B cell (primary cell): ENCODE measurements at regions of chr9 and their contacts with region 1.

Region 1: GRCh38 chr9:98056269-98057137 is at the start of gene NANS:
- DNase-seq: peak; percentile 92
- ATAC-seq: peak; percentile 97
- H3K4me3 ChIP-seq: peak within 1 kb of the TSS; percentile 76 to 85 (median 81)
- H3K4me3 Mint-ChIP-seq: peak within 1 kb of the TSS; percentile 99
- H3K27ac ChIP-seq: peak within 1 kb of the TSS; percentile 80 to 89
- H3K27ac Mint-ChIP-seq: peak within 1 kb of the TSS; percentile 95
- H3K4me1 ChIP-seq: peaks cover 8 to 18% of the 10 kb centered on the region in 2 donors
- H3K4me1 Mint-ChIP-seq: peaks cover 17% of the 10 kb centered on the region
- H3K27me3 ChIP-seq: no peaks in the 10 kb centered on the region
- H3K27me3 Mint-ChIP-seq: no peaks in the 10 kb centered on the region
- CTCF ChIP-seq: no peak
- total RNA-seq, gene NANS: 14.9 and 15.3 TPM in 2 replicates

Region 2: GRCh38 chr9:97632985-97633858 is 423.3 kb before region 1 on chr9 and contains the starts of genes NCBP1 and TSTD2:
- CTCF ChIA-PET with region 1: no interaction called
- POLR2A ChIA-PET with region 1: no interaction called
- intact Hi-C with region 1: loop called (anchors 5 kb)
- DNase-seq: peak; percentile 99
- ATAC-seq: peak; percentile 91
- H3K4me3 ChIP-seq: peak within 1 kb of the TSS; percentile 94 to 99 (median 95)
- H3K4me3 Mint-ChIP-seq: peak within 1 kb of the TSS; percentile 97
- H3K27ac ChIP-seq: peak within 1 kb of the TSS; percentile 92 to 93
- H3K27ac Mint-ChIP-seq: peak within 1 kb of the TSS; percentile 98
- H3K4me1 ChIP-seq: peaks cover 26 to 35% of the 10 kb centered on the region in 2 donors
- H3K4me1 Mint-ChIP-seq: peaks cover 58% of the 10 kb centered on the region
- H3K27me3 ChIP-seq: no peaks in the 10 kb centered on the region
- H3K27me3 Mint-ChIP-seq: no peaks in the 10 kb centered on the region
- CTCF ChIP-seq: no peak
- total RNA-seq, gene NCBP1: 38.0 and 40.7 TPM in 2 replicates
- total RNA-seq, gene TSTD2: 29.2 and 31.1 TPM in 2 replicates

Region 3: DNA sequence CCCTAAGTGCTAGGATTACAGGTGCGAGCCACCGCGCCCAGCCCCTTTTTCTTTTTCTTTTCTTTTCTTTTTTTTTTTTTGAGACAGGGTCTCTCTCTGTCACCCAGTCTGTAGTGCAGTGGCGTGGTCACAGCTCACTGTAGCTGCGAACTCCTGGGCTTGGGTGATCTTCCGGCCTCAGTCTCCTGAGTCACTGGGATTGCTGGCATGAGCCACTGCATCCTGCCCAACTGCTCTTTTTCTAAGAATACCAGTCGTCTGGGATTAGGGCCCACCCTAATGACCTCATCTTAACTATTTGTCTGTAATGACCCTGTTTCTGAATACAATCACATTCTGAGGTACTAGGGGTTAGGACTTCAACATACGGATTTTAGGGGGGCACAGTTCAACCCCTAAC is 34.1 kb before region 1 on chr9:
- CTCF ChIA-PET with region 1: no interaction called
- POLR2A ChIA-PET with region 1: no interaction called
- intact Hi-C with region 1: no loop called
- DNase-seq: no peak
- ATAC-seq: no peak
- H3K4me3 ChIP-seq: no peak overlapping the region
- H3K4me3 Mint-ChIP-seq: no peak overlapping the region
- H3K27ac ChIP-seq: no peak overlapping the region
- H3K27ac Mint-ChIP-seq: no peak overlapping the region
- H3K4me1 ChIP-seq: no peaks in the 10 kb centered on the region
- H3K4me1 Mint-ChIP-seq: no peaks in the 10 kb centered on the region
- H3K27me3 ChIP-seq: no peaks in the 10 kb centered on the region
- H3K27me3 Mint-ChIP-seq: no peaks in the 10 kb centered on the region
- CTCF ChIP-seq: no peak

Region 4: GRCh38 chr9:98034593-98035546 is 21.6 kb before region 1 on chr9:
- CTCF ChIA-PET with region 1: interaction called, 11 read pairs
- POLR2A ChIA-PET with region 1: no interaction called
- intact Hi-C with region 1: loop called (anchors 1 kb)
- DNase-seq: peak; percentile 91
- ATAC-seq: peak; percentile 87
- H3K4me3 ChIP-seq: peak overlapping the region in 1 of 5 experiments; percentile 38
- H3K4me3 Mint-ChIP-seq: peak overlapping the region; percentile 53
- H3K27ac ChIP-seq: peak overlapping the region; percentile 1 to 34
- H3K27ac Mint-ChIP-seq: peak overlapping the region; percentile 57
- H3K4me1 ChIP-seq: peaks cover 10 to 25% of the 10 kb centered on the region in 2 donors
- H3K4me1 Mint-ChIP-seq: peaks cover 37% of the 10 kb centered on the region
- H3K27me3 ChIP-seq: no peaks in the 10 kb centered on the region
- H3K27me3 Mint-ChIP-seq: no peaks in the 10 kb centered on the region
- CTCF ChIP-seq: peak; percentile 78

Region 5: DNA sequence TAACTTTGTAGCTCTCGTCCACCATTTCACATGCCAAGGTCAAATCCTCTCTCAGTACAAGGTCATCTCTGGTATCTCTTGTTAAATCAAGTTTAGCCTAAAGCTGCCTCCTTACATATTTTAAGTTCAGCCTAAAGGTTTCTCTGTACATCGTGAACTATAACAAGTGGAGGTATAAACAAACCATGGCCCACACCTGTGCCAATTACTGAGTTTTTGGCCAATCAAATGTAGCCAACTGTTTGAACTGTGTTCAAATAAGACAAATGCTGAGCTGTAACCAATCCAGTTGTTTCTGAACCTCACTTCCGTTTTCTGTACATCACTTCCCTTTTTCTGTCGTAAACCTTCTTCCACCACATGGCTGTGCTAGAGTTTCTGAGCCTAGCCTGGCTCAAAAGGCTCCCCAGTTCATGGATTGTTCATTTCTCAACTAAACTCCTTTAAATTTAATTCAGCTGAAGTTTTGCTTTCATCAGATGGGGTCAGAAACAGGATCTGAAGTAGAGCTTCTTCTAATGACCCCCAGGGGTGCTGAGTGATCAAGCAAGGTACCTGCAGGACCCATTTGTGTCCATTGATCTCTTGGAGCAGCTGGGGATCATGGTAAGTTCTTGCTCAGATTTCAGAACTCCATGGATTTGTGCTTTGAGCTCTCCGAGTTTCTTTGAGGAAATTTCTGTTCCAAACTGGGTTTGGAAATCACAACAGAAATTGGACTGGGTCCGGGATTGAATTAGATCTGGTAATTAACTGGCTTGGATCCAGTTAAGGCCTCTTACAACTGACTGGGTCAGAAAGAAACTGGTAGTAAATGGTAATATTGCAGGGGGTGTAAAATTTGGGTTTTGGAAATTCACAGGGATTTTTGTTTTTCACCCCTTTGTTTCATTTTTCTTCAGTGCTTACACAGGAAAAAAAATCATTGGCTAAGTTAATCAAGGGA is 11.0 kb before region 1 on chr9:
- CTCF ChIA-PET with region 1: interaction called, 8 read pairs
- POLR2A ChIA-PET with region 1: interaction called, 6 read pairs
- intact Hi-C with region 1: loop called (anchors 1 kb)
- DNase-seq: peak; percentile 83
- ATAC-seq: peak; percentile 77
- H3K4me3 ChIP-seq: peak overlapping the region; percentile 15 to 74 (median 48)
- H3K4me3 Mint-ChIP-seq: peak overlapping the region; percentile 63
- H3K27ac ChIP-seq: peak overlapping the region; percentile 56 to 80
- H3K27ac Mint-ChIP-seq: peak overlapping the region; percentile 84
- H3K4me1 ChIP-seq: peaks cover 33 to 35% of the 10 kb centered on the region in 2 donors
- H3K4me1 Mint-ChIP-seq: peaks cover 39% of the 10 kb centered on the region
- H3K27me3 ChIP-seq: no peaks in the 10 kb centered on the region
- H3K27me3 Mint-ChIP-seq: no peaks in the 10 kb centered on the region
- CTCF ChIP-seq: peak; percentile 13

Region 6: GRCh38 chr9:98101868-98102273 is 45.4 kb after region 1 on chr9:
- CTCF ChIA-PET with region 1: no interaction called
- POLR2A ChIA-PET with region 1: interaction called, 6 read pairs
- intact Hi-C with region 1: loop called (anchors 5 kb)
- DNase-seq: peak; percentile 91
- ATAC-seq: peak; percentile 98
- H3K4me3 ChIP-seq: peak overlapping the region in 1 of 5 experiments; percentile 38
- H3K4me3 Mint-ChIP-seq: peak overlapping the region; percentile 68
- H3K27ac ChIP-seq: peak overlapping the region; percentile 66 to 74
- H3K27ac Mint-ChIP-seq: peak overlapping the region; percentile 81
- H3K4me1 ChIP-seq: peaks cover 82 to 87% of the 10 kb centered on the region in 2 donors
- H3K4me1 Mint-ChIP-seq: peaks cover 77% of the 10 kb centered on the region
- H3K27me3 ChIP-seq: no peaks in the 10 kb centered on the region
- H3K27me3 Mint-ChIP-seq: no peaks in the 10 kb centered on the region
- CTCF ChIP-seq: no peak

Region 7: DNA sequence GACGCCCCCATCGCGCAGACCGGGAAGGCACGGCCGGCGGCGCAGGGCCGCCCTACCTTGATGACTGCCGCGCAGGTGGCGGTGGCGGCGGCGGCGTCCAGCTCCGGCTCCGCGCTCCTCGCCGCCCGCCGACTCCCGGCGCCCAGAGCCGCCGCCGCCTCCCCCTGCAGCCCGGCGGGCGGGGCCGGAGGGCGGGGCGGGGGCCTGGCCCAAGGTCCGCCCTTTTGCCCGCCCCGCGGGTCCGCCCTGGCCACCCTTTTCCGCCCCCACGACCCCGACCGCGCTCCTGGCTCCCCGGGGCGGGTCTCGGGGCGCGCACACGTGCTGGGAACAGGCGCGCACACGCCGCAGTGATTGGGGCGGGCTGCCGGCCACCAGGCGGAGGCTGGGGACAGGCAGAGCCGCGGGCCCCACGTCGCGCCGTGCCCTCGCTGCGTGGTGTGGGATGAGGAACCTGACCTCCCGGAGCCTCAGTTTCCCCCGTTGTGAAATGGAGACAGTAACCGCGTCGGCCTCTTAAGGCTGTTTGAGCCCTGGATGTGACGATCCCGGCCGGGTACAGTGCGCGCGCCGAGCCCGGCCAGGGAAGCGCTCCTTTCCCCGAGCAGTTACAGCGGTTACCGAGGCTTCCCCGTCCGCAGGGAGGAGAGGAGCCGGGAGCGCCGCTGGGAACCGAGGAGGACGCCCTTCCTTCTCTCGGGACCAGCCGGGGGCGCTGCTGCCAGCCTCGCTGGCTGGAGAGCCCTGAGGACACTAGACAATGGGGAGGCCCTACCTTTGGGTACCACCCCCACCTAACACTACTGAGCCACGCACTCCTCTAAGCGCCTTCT is 136.2 kb after region 1 on chr9 and contains the start of gene CORO2A:
- CTCF ChIA-PET with region 1: no interaction called
- POLR2A ChIA-PET with region 1: no interaction called
- intact Hi-C with region 1: no loop called
- DNase-seq: peak; percentile 73
- ATAC-seq: peak; percentile 91
- H3K4me3 ChIP-seq: peak within 1 kb of the TSS; percentile 34 to 77 (median 67)
- H3K4me3 Mint-ChIP-seq: peak within 1 kb of the TSS; percentile 91
- H3K27ac ChIP-seq: no peak within 1 kb of the TSS
- H3K27ac Mint-ChIP-seq: peak within 1 kb of the TSS; percentile 71
- H3K4me1 ChIP-seq: peaks cover 8 to 18% of the 10 kb centered on the region in 2 donors
- H3K4me1 Mint-ChIP-seq: peaks cover 10% of the 10 kb centered on the region
- H3K27me3 ChIP-seq: peaks cover 0 to 12% (median 2%) of the 10 kb centered on the region in 4 experiments
- H3K27me3 Mint-ChIP-seq: no peaks in the 10 kb centered on the region
- CTCF ChIP-seq: peak; percentile 23
- total RNA-seq, gene CORO2A: 2.0 TPM in 2 replicates